ENCODE measurements at regions of chr4 and their contacts with region 1.

Region 1: DNA sequence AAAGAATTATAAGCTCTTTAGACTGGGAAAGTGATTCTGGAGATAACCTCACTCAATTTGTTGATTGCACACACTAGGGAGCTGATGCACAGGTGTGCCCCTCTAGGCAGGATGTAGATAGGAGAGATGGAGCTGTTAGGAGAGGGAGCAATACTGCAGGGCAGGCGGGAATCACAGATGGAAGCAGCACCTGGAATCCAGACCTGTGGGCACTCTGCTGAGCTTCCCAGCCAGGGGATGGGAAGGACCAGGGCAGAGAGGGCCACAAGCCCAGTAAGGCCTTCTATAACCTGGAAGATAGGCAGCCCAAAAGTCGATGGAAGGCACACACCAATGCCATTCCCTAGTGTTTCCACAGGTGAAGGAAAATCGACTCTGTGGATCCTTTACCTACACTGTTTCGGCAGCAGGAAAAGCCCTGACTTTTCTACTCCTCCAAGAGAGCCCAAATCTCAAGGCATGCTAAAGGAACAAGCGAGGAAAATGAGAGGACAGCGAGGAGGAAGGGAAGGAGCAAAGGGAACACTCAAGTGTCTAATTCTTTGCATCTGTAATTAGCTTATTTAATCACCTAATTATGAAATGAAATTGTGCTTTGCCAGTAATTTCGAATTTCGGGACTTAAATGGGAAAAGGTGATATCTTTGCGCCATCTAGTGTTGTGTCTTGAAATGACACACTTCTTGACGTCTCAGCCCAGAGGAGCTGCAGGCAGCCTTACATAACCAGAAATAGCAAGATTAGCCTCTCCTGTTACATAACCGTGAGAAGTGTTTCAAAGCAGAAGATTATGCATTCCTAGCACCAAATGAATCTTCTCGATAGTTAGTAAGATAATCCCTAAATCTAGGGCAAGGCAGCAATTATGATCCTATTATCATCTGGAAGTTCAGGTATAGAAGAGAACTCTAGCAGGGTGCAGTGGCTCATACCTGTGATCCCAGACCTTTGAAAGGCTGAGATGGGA is 31.0 kb upstream of the TLR3 start:
- DNase-seq: peak; percentile 53 to 74 (median 66)
- ATAC-seq: peak; percentile 81
- H3K4me3 ChIP-seq: no peak overlapping the region
- H3K27ac ChIP-seq: no peak overlapping the region
- H3K4me1 ChIP-seq: no peaks in the 10 kb centered on the region
- H3K27me3 ChIP-seq: peaks cover 0 to 15% of the 10 kb centered on the region in 2 experiments; a peak in 4 of 5 replicates
- CTCF ChIP-seq: peak; percentile 62 to 82 (median 64)
- EP300 ChIP-seq: no peak
- POLR2A ChIP-seq: no peak
- RAD21 ChIP-seq: peak; percentile 65 to 72

Region 2: DNA sequence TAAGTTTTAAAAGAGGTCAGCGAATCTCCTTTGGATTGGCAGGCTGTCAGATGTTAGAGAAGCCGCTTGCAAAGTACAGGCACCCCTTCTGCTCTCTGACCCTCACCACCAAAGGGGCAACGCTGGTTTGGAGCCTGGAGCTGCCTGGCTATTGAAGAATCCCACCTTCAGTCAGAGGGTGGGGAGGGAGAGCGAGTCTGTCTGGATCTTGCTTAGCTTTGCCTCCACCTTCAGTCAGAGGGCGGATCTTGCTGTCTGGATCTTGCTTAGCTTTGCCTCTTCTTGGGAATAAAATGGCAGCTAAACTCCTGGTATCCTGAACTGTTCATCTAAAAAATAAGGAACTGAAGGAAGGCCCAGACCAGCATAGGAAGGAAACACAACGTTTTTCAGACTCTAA is 573.8 kb before region 1 on chr4:
- CTCF ChIA-PET with region 1: no interaction called
- POLR2A ChIA-PET with region 1: no interaction called
- in situ Hi-C with region 1: no loop called
- intact Hi-C with region 1: loop called (anchors 5 kb)
- DNase-seq: peak in 1 of 4 experiments; percentile 8
- ATAC-seq: peak; percentile 43; the same call in 1 of the 3 replicates
- H3K4me3 ChIP-seq: no peak overlapping the region
- H3K27ac ChIP-seq: no peak overlapping the region
- H3K4me1 ChIP-seq: no peaks in the 10 kb centered on the region
- H3K27me3 ChIP-seq: peaks cover 49 to 53% of the 10 kb centered on the region in 2 experiments
- CTCF ChIP-seq: no peak
- EP300 ChIP-seq: no peak
- POLR2A ChIP-seq: no peak
- RAD21 ChIP-seq: no peak